ENCODE measurements at regions of chr9 and their contacts with region 1.

Region 1: GRCh38 chr9:107484117-107484723 is 5.3 kb downstream of the KLF4 start:
- DNase-seq: peak; percentile 7
- ATAC-seq: peak; percentile 91
- H3K4me3 ChIP-seq: no peak overlapping the region
- H3K27ac ChIP-seq: no peak overlapping the region
- H3K4me1 ChIP-seq: 0 out of 2 replicates have a peak, but pooled peaks cover 2% of the 10 kb centered on the region
- H3K27me3 ChIP-seq: peaks cover 4 to 15% of the 10 kb centered on the region in 2 experiments; a peak in 3 of 4 replicates
- CTCF ChIP-seq: peak; percentile 38 to 61 (median 45); a peak in 5 of 6 replicates
- EP300 ChIP-seq: no peak
- POLR2A ChIP-seq: no peak
- RAD21 ChIP-seq: peak; percentile 82

Region 2: GRCh38 chr9:107502464-107502863 is 18.2 kb after region 1 on chr9:
- CTCF ChIA-PET with region 1: no interaction called
- POLR2A ChIA-PET with region 1: no interaction called
- RAD21 ChIA-PET with region 1: no interaction called
- SMC1A ChIA-PET with region 1: no interaction called
- in situ Hi-C with region 1: no loop called
- intact Hi-C with region 1: no loop called
- DNase-seq: no peak
- ATAC-seq: no peak
- H3K4me3 ChIP-seq: no peak overlapping the region
- H3K27ac ChIP-seq: no peak overlapping the region
- H3K4me1 ChIP-seq: no peaks in the 10 kb centered on the region
- H3K27me3 ChIP-seq: peaks cover 0 to 1% of the 10 kb centered on the region in 2 experiments; a peak in 1 of 4 replicates
- CTCF ChIP-seq: no peak
- EP300 ChIP-seq: no peak
- POLR2A ChIP-seq: no peak
- RAD21 ChIP-seq: no peak

Region 3: GRCh38 chr9:107547303-107548047 is 63.3 kb after region 1 on chr9:
- CTCF ChIA-PET with region 1: no interaction called
- POLR2A ChIA-PET with region 1: no interaction called
- RAD21 ChIA-PET with region 1: no interaction called
- SMC1A ChIA-PET with region 1: no interaction called
- in situ Hi-C with region 1: no loop called
- intact Hi-C with region 1: no loop called
- DNase-seq: no peak
- ATAC-seq: peak; percentile 27; the same call in 1 of the 3 replicates
- H3K4me3 ChIP-seq: no peak overlapping the region
- H3K27ac ChIP-seq: no peak overlapping the region
- H3K4me1 ChIP-seq: no peaks in the 10 kb centered on the region; the same call in 1 of the 2 replicates
- H3K27me3 ChIP-seq: no peaks in the 10 kb centered on the region
- CTCF ChIP-seq: no peak
- EP300 ChIP-seq: no peak
- POLR2A ChIP-seq: no peak
- RAD21 ChIP-seq: no peak

Region 4: GRCh38 chr9:108272349-108272899 is 788.2 kb after region 1 on chr9:
- CTCF ChIA-PET with region 1: interaction called, 13 read pairs
- POLR2A ChIA-PET with region 1: no interaction called
- RAD21 ChIA-PET with region 1: interaction called, 8 read pairs
- SMC1A ChIA-PET with region 1: interaction called, 18 read pairs
- in situ Hi-C with region 1: loop called (anchors 25 kb)
- intact Hi-C with region 1: loop called (anchors 2 kb)
- DNase-seq: no peak
- ATAC-seq: peak; percentile 67
- H3K4me3 ChIP-seq: no peak overlapping the region
- H3K27ac ChIP-seq: no peak overlapping the region
- H3K4me1 ChIP-seq: no peaks in the 10 kb centered on the region
- H3K27me3 ChIP-seq: no peaks in the 10 kb centered on the region
- CTCF ChIP-seq: peak; percentile 13 to 29 (median 17); a peak in 3 of 6 replicates
- EP300 ChIP-seq: no peak
- POLR2A ChIP-seq: no peak
- RAD21 ChIP-seq: peak; percentile 53

Region 5: DNA sequence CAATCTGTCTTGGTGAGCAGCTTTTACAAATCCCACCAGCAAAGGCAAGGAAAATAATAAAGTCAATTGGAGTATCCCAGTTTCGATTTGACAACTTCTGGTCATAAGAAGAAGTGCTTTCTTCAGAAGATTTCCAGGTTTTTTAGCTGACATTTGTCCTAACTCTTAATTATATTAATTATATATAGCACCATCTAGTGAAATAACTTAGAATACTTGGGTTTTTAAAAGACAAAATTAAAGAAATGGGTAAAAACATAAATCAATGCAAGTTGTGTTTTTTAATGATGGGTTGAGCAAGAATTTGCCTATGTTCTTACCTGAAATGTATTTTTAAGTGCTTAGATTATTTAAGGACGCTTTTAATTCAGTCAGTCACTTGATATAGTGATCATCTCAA is 949.8 kb after region 1 on chr9:
- CTCF ChIA-PET with region 1: no interaction called
- POLR2A ChIA-PET with region 1: no interaction called
- RAD21 ChIA-PET with region 1: no interaction called
- SMC1A ChIA-PET with region 1: no interaction called
- in situ Hi-C with region 1: no loop called
- intact Hi-C with region 1: loop called (anchors 5 kb)
- DNase-seq: no peak
- ATAC-seq: no peak
- H3K4me3 ChIP-seq: no peak overlapping the region
- H3K27ac ChIP-seq: no peak overlapping the region
- H3K4me1 ChIP-seq: no peaks in the 10 kb centered on the region
- H3K27me3 ChIP-seq: no peaks in the 10 kb centered on the region; a peak in 1 of 4 replicates
- CTCF ChIP-seq: no peak
- EP300 ChIP-seq: no peak
- POLR2A ChIP-seq: no peak
- RAD21 ChIP-seq: no peak

Measured in GM12878 (cell line).